Right ventricle myocardium inferior (tissue), 1 donor: ENCODE measurements at regions of chr3 and their contacts with region 1.

Region 1: DNA sequence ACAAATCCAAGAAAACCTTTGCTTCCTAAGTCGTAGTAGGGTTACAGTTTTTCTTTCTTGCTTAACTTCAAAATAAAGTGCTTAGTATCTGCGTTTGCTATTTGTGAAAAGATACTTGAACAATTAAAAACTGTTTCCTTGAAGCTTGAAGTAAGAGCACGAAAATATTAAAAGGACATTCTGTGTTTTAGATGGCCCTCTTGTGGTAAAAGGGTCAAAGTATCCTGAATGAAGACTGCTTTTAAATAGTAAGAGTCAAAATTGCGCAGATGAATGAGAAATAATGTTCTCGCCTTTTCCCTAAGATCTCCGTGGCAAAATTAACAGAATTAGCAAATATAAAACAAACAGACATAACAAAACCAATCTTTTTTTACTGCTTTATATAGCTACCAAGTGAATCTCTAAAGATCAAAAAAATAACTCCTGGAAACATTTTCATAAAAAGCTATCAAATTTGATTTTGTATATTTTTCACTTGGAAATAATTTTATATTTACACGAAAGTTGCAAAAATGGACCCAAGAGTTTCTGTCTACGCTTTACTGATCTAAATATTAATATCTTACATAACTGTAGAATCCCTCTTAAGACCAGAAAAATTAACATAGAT is 175.4 kb downstream of the MBNL1 start:
- DNase-seq: no peak
- ATAC-seq: peak; percentile 54

Region 2: DNA sequence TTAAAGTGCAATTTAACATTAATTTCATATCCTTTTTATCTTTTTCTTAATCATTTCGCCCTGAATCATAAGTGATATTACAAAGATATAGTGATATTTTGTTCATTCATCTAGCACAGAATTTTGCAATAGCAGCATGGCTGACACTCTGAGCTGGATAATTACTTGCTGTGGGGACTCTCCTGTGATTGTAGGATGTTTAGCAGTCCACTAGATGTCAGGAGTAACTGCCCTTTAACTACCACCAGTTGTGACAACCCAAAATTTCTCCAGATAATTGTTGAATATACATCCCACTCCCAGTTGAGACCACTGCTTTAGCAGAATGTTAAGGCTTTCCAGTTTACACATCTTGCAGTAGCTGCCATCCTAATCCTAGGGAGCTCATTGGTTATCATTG is 372.2 kb before region 1 on chr3:
- intact Hi-C with region 1: loop called (anchors 10 kb)
- DNase-seq: no peak
- ATAC-seq: no peak

Region 3: GRCh38 chr3:152183473-152183872 is 260.7 kb before region 1 on chr3:
- intact Hi-C with region 1: loop called (anchors 2 kb)
- DNase-seq: no peak
- ATAC-seq: peak; percentile 76

Region 4: DNA sequence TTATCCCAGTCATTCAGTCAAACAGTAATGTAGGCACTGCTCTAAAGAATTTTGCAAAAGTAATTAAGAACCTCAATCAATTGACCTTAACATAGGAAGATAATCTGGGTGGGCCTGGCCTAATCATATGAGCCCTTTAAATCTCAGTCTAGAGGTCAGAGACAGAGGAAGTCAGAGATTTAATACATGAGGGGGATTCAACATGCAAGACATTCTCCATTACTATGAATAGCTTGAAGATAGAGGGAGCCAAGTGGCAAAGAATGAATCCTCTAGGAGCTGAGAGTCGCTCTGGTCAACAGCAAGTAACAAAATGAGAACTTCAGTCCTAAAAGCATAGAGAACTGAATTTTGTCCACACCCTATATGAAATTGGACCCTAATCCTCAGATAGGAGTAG is 214.4 kb before region 1 on chr3:
- intact Hi-C with region 1: loop called (anchors 2 kb)
- DNase-seq: no peak
- ATAC-seq: peak; percentile 78

Region 5: DNA sequence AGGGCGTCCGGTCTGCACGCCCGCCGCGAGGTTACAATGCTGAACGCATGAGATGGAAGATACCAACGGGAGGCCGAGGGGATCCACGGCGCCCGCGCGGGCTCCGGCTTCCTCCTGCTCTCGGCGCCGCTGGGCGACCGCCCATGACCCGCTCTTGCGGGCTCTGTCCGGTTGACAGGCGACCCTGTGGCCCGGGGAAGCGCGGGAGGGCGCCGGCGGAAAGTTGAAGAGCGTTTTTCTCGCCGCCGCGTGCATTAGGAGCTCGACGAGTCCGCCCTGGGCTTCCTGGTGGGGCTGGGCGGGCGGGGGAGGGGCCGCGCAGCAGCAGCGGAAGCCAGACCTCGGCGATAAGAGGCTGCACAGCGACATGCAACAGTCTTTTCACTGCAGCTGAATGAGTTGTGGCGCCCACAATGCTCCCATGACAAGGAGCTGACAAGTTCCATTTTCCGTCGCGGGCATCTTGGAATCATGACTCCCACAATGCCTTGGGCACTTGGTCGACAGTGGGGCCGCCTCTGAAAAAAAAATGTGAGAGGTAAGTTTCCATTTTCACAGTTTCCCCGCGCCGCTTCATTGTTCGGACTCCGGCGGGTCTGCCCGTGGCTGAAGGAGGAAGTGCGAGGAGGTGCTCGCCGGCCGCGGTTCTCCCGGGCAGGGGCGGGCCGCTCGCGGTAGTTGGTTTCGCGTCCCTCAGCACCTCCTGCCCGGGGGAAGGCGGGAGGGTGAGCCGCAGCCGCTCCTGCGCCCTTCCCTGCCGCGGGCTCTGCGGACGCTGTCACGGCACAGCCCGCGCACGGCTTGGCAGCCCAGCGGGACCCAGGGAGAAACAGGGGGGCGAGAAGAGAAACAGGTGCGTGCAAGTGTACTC is 175.3 kb before region 1 on chr3 and contains the start of gene MBNL1:
- intact Hi-C with region 1: loop called (anchors 2 kb)
- DNase-seq: peak; percentile 93
- ATAC-seq: peak; percentile 78
- total RNA-seq, gene MBNL1: 180 TPM

Region 6: GRCh38 chr3:152298393-152299242 is 145.5 kb before region 1 on chr3:
- intact Hi-C with region 1: loop called (anchors 10 kb)
- DNase-seq: peak; percentile 45
- ATAC-seq: peak; percentile 78

Region 7: DNA sequence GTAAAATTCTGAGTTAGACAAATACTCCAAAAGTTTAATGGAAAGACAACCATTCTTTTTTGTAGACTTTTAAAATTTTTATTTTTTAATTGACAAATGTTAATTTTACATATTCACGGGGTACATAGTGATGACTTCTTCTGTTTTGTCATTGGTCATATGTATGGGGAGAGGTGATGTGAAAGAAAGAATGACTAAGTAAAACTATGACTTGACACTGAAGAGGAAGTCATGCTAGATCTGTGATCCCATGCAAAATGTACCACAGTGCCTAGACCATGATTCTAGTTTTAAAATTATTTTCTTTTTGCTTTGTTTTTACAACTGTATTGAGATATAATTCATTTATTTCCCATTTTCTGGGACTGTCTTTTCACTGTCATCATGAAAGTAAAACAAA is 106.1 kb after region 1 on chr3:
- intact Hi-C with region 1: no loop called
- DNase-seq: no peak
- ATAC-seq: no peak